GM12878 (cell line): ENCODE measurements at regions of chr13 and their contacts with region 1.

Region 1: GRCh38 chr13:113562085-113562749 is 22.3 kb upstream of the TFDP1 start:
- DNase-seq: no peak
- ATAC-seq: peak; percentile 92
- H3K4me3 ChIP-seq: no peak overlapping the region
- H3K27ac ChIP-seq: no peak overlapping the region
- H3K4me1 ChIP-seq: no peaks in the 10 kb centered on the region
- H3K27me3 ChIP-seq: no peaks in the 10 kb centered on the region
- CTCF ChIP-seq: peak; percentile 65 to 80 (median 75)
- EP300 ChIP-seq: no peak
- POLR2A ChIP-seq: no peak
- RAD21 ChIP-seq: peak; percentile 71

Region 2: DNA sequence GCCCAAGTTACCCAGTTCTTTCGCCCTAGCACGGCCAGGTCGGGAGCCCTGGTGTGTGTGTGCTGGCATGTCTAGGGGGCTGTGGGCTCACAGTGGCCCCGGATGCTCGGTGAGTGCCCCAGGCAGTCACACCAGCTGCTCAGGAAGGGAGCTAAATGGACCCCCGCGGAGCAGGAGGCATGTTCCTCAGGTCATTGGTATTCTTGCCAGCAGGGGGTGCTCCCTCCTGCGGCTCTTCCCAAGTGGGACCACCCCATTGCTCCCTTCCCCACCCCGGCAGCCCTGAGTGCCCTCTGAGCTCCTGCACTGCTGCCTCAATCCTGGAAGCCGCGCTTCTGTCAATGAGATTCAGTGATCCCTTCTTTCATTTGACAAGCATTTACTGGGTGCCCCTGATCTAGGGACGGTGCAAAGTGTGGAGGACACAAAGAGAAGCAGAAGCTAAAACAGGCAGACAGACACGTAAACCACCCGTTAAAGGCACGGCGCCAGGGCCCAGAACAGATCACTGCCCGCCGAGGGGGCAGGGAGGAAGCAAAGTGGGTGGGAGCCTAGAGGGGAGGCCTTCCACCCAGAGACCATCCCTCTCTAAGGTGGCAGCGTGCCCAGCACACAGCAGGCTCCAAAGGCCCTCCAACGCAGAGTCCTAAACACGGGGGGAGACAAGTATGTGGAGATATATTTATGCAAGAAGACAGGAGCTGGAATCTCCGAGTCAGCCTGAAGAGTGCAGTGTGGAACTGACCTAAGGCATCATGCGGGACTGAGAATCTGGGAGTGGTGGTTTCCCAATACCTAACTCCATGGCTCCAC is 103.8 kb before region 1 on chr13:
- CTCF ChIA-PET with region 1: interaction called, 20 read pairs
- POLR2A ChIA-PET with region 1: no interaction called
- RAD21 ChIA-PET with region 1: interaction called, 5 read pairs
- SMC1A ChIA-PET with region 1: no interaction called
- in situ Hi-C with region 1: no loop called
- intact Hi-C with region 1: loop called (anchors 1 kb)
- DNase-seq: no peak
- ATAC-seq: no peak
- H3K4me3 ChIP-seq: no peak overlapping the region
- H3K27ac ChIP-seq: no peak overlapping the region
- H3K4me1 ChIP-seq: no peaks in the 10 kb centered on the region
- H3K27me3 ChIP-seq: no peaks in the 10 kb centered on the region
- CTCF ChIP-seq: peak; percentile 23 to 36 (median 26); a peak in 4 of 6 replicates
- EP300 ChIP-seq: no peak
- POLR2A ChIP-seq: no peak
- RAD21 ChIP-seq: no peak

Region 3: GRCh38 chr13:113537870-113538682 is 24.1 kb before region 1 on chr13:
- CTCF ChIA-PET with region 1: interaction called, 3 read pairs
- POLR2A ChIA-PET with region 1: no interaction called
- RAD21 ChIA-PET with region 1: no interaction called
- SMC1A ChIA-PET with region 1: no interaction called
- in situ Hi-C with region 1: no loop called
- intact Hi-C with region 1: loop called (anchors 2 kb)
- DNase-seq: no peak
- ATAC-seq: no peak
- H3K4me3 ChIP-seq: no peak overlapping the region
- H3K27ac ChIP-seq: no peak overlapping the region
- H3K4me1 ChIP-seq: no peaks in the 10 kb centered on the region
- H3K27me3 ChIP-seq: no peaks in the 10 kb centered on the region
- CTCF ChIP-seq: no peak
- EP300 ChIP-seq: no peak
- POLR2A ChIP-seq: no peak
- RAD21 ChIP-seq: no peak

Region 4: DNA sequence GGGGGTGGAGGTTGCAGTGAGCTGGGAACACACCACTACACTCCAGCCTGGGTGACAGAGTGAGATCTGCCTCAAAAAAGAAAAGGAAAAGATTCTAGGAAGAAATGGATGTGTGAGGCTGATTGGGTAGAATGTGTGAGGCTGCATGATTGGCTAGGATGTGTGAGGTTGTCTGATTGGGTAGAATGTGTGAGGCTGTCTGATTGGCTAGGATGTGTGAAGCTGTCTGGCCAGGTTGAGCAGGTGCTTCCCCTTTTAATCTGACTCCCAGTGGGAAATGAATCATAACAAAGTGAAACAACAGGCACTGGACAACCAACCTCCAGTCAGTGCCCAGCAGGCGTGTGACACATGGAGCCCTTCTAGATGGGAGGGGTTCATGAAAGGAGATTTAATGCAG is 397.0 kb after region 1 on chr13:
- CTCF ChIA-PET with region 1: no interaction called
- POLR2A ChIA-PET with region 1: no interaction called
- RAD21 ChIA-PET with region 1: no interaction called
- SMC1A ChIA-PET with region 1: no interaction called
- in situ Hi-C with region 1: no loop called
- intact Hi-C with region 1: no loop called
- DNase-seq: no peak
- ATAC-seq: no peak
- H3K4me3 ChIP-seq: no peak overlapping the region
- H3K27ac ChIP-seq: no peak overlapping the region
- H3K4me1 ChIP-seq: no peaks in the 10 kb centered on the region
- H3K27me3 ChIP-seq: no peaks in the 10 kb centered on the region
- CTCF ChIP-seq: no peak
- EP300 ChIP-seq: no peak
- POLR2A ChIP-seq: no peak
- RAD21 ChIP-seq: no peak